CD4-positive, alpha-beta T cell (primary cell): ENCODE measurements at regions of chr22 and their contacts with region 1.

Region 1: GRCh38 chr22:19629720-19630419 is 84.4 kb upstream of the SEPTIN5 start:
- DNase-seq: peak; percentile 78 to 91 (median 86)
- ATAC-seq: peak; percentile 99
- H3K4me3 ChIP-seq: no peak overlapping the region
- H3K4me3 Mint-ChIP-seq: no peak overlapping the region
- H3K27ac ChIP-seq: no peak overlapping the region
- H3K27ac Mint-ChIP-seq: no peak overlapping the region
- H3K4me1 ChIP-seq: peaks cover 7% of the 10 kb centered on the region
- H3K4me1 Mint-ChIP-seq: peaks cover 6% of the 10 kb centered on the region
- H3K27me3 ChIP-seq: no peaks in the 10 kb centered on the region
- H3K27me3 Mint-ChIP-seq: no peaks in the 10 kb centered on the region
- CTCF ChIP-seq: peak; percentile 91

Region 2: GRCh38 chr22:19109198-19110067 is 520.4 kb before region 1 on chr22:
- CTCF ChIA-PET with region 1: no interaction called
- POLR2A ChIA-PET with region 1: no interaction called
- intact Hi-C with region 1: loop called in 1 of 2 experiments (anchors 10 kb)
- DNase-seq: peak; percentile 28 to 88 (median 52)
- ATAC-seq: peak; percentile 84
- H3K4me3 ChIP-seq: peak overlapping the region; percentile 40
- H3K4me3 Mint-ChIP-seq: peak overlapping the region; percentile 84
- H3K27ac ChIP-seq: peak overlapping the region; percentile 85 to 90
- H3K27ac Mint-ChIP-seq: peak overlapping the region; percentile 86
- H3K4me1 ChIP-seq: peaks cover 62% of the 10 kb centered on the region
- H3K4me1 Mint-ChIP-seq: peaks cover 75% of the 10 kb centered on the region
- H3K27me3 ChIP-seq: no peaks in the 10 kb centered on the region
- H3K27me3 Mint-ChIP-seq: no peaks in the 10 kb centered on the region
- CTCF ChIP-seq: no peak

Region 3: GRCh38 chr22:19387038-19387437 is 242.8 kb before region 1 on chr22:
- CTCF ChIA-PET with region 1: interaction called, 4 read pairs
- POLR2A ChIA-PET with region 1: no interaction called
- intact Hi-C with region 1: loop called in 1 of 2 experiments (anchors 10 kb)
- DNase-seq: no peak
- ATAC-seq: no peak
- H3K4me3 ChIP-seq: no peak overlapping the region
- H3K4me3 Mint-ChIP-seq: no peak overlapping the region
- H3K27ac ChIP-seq: no peak overlapping the region
- H3K27ac Mint-ChIP-seq: no peak overlapping the region
- H3K4me1 ChIP-seq: no peaks in the 10 kb centered on the region
- H3K4me1 Mint-ChIP-seq: no peaks in the 10 kb centered on the region
- H3K27me3 ChIP-seq: no peaks in the 10 kb centered on the region
- H3K27me3 Mint-ChIP-seq: no peaks in the 10 kb centered on the region
- CTCF ChIP-seq: no peak

Region 4: GRCh38 chr22:19495562-19496323 is 134.1 kb before region 1 on chr22:
- CTCF ChIA-PET with region 1: interaction called, 22 read pairs
- POLR2A ChIA-PET with region 1: interaction called, 10 read pairs
- intact Hi-C with region 1: loop called (anchors 1 kb)
- DNase-seq: peak in 4 of 14 experiments; percentile 5 to 64 (median 52)
- ATAC-seq: peak; percentile 70
- H3K4me3 ChIP-seq: no peak overlapping the region
- H3K4me3 Mint-ChIP-seq: no peak overlapping the region
- H3K27ac ChIP-seq: no peak overlapping the region
- H3K27ac Mint-ChIP-seq: peak overlapping the region; percentile 47
- H3K4me1 ChIP-seq: no peaks in the 10 kb centered on the region
- H3K4me1 Mint-ChIP-seq: peaks cover 9% of the 10 kb centered on the region
- H3K27me3 ChIP-seq: no peaks in the 10 kb centered on the region
- H3K27me3 Mint-ChIP-seq: no peaks in the 10 kb centered on the region
- CTCF ChIP-seq: peak; percentile 39

Region 5: GRCh38 chr22:19576460-19577421 is 53.1 kb before region 1 on chr22:
- CTCF ChIA-PET with region 1: no interaction called
- POLR2A ChIA-PET with region 1: no interaction called
- intact Hi-C with region 1: loop called in 1 of 2 experiments (anchors 10 kb)
- DNase-seq: peak in 11 of 14 experiments; percentile 19 to 64 (median 40)
- ATAC-seq: peak; percentile 69
- H3K4me3 ChIP-seq: no peak overlapping the region
- H3K4me3 Mint-ChIP-seq: no peak overlapping the region
- H3K27ac ChIP-seq: no peak overlapping the region
- H3K27ac Mint-ChIP-seq: no peak overlapping the region
- H3K4me1 ChIP-seq: peaks cover 33% of the 10 kb centered on the region
- H3K4me1 Mint-ChIP-seq: peaks cover 40% of the 10 kb centered on the region
- H3K27me3 ChIP-seq: no peaks in the 10 kb centered on the region
- H3K27me3 Mint-ChIP-seq: no peaks in the 10 kb centered on the region
- CTCF ChIP-seq: no peak

Region 6: GRCh38 chr22:19663286-19663815 is 33.5 kb after region 1 on chr22:
- CTCF ChIA-PET with region 1: no interaction called
- POLR2A ChIA-PET with region 1: no interaction called
- intact Hi-C with region 1: no loop called
- DNase-seq: no peak
- ATAC-seq: no peak
- H3K4me3 ChIP-seq: no peak overlapping the region
- H3K4me3 Mint-ChIP-seq: no peak overlapping the region
- H3K27ac ChIP-seq: no peak overlapping the region
- H3K27ac Mint-ChIP-seq: no peak overlapping the region
- H3K4me1 ChIP-seq: no peaks in the 10 kb centered on the region
- H3K4me1 Mint-ChIP-seq: no peaks in the 10 kb centered on the region
- H3K27me3 ChIP-seq: no peaks in the 10 kb centered on the region
- H3K27me3 Mint-ChIP-seq: peaks cover 5% of the 10 kb centered on the region
- CTCF ChIP-seq: no peak

Region 7: DNA sequence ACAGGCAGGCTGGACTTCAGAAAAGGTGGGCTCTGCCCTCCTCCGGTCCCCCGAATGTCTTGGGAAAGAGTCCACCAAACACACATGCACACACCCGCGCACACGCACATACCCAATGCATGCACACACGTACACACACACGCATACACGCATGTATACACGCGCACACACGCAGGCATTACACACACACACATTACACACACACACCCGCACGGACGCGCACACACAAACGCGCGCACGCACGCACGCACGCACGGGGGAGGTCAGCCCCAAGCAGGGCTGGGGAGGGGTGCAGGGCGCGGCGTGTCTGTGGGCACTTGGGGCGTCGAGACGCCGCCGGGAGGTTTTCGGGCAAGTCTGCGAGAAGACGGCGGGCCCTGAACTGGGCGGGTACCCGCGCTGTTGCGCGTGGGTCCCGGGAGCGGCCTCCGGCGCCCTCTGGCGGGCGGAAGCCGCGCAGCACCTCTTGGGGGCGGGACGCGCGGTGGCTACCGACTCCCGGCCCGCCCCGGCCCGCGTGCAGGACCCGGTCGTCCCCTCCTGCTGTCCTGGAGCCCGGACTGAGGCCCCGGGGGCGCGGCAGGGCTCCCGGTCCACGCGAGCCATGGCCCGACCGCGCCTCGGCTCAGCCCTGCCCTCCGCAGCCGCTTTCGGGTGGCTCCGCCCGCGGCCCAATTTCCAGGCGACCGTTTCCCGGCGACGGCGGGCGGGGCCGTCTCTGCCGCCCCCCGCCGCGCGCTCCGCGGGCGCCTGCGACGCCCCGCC is 88.0 kb after region 1 on chr22:
- CTCF ChIA-PET with region 1: no interaction called
- POLR2A ChIA-PET with region 1: no interaction called
- intact Hi-C with region 1: loop called in 1 of 2 experiments (anchors 2 kb)
- DNase-seq: peak; percentile 68 to 91 (median 78)
- ATAC-seq: peak; percentile 95
- H3K4me3 ChIP-seq: peak overlapping the region; percentile 31
- H3K4me3 Mint-ChIP-seq: peak overlapping the region; percentile 82
- H3K27ac ChIP-seq: no peak overlapping the region
- H3K27ac Mint-ChIP-seq: no peak overlapping the region
- H3K4me1 ChIP-seq: peaks cover 35% of the 10 kb centered on the region
- H3K4me1 Mint-ChIP-seq: peaks cover 10% of the 10 kb centered on the region
- H3K27me3 ChIP-seq: peaks cover 58 to 63% of the 10 kb centered on the region in 2 experiments
- H3K27me3 Mint-ChIP-seq: peaks cover 45% of the 10 kb centered on the region
- CTCF ChIP-seq: peak; percentile 96

Region 8: GRCh38 chr22:19756288-19757128 is 126.6 kb after region 1 on chr22:
- CTCF ChIA-PET with region 1: no interaction called
- POLR2A ChIA-PET with region 1: no interaction called
- intact Hi-C with region 1: no loop called
- DNase-seq: peak; percentile 59 to 87 (median 73)
- ATAC-seq: peak; percentile 85
- H3K4me3 ChIP-seq: peak overlapping the region; percentile 40
- H3K4me3 Mint-ChIP-seq: peak overlapping the region; percentile 87
- H3K27ac ChIP-seq: no peak overlapping the region
- H3K27ac Mint-ChIP-seq: no peak overlapping the region
- H3K4me1 ChIP-seq: peaks cover 32% of the 10 kb centered on the region
- H3K4me1 Mint-ChIP-seq: peaks cover 33% of the 10 kb centered on the region
- H3K27me3 ChIP-seq: peaks cover 45 to 59% of the 10 kb centered on the region in 2 experiments
- H3K27me3 Mint-ChIP-seq: peaks cover 68% of the 10 kb centered on the region
- CTCF ChIP-seq: peak; percentile 62